ENCODE measurements at regions of chr4 and their contacts with region 1.

Region 1: GRCh38 chr4:169010125-169011023 is at the start of gene CBR4:
- DNase-seq: peak; percentile 90 to 99
- ATAC-seq: peak; percentile 94 to 98 (median 94)
- H3K4me3 ChIP-seq: peak within 1 kb of the TSS; percentile 93
- H3K4me3 Mint-ChIP-seq: peak within 1 kb of the TSS; percentile 88
- H3K27ac ChIP-seq: peak within 1 kb of the TSS; percentile 98
- H3K27ac Mint-ChIP-seq: peak within 1 kb of the TSS; percentile 93 to 99
- H3K4me1 ChIP-seq: peaks cover 24% of the 10 kb centered on the region
- H3K4me1 Mint-ChIP-seq: peaks cover 56 to 59% of the 10 kb centered on the region in 2 donors
- H3K27me3 ChIP-seq: no peaks in the 10 kb centered on the region
- H3K27me3 Mint-ChIP-seq: no peaks in the 10 kb centered on the region
- CTCF ChIP-seq: peak; percentile 2
- total RNA-seq, gene CBR4: 17.2 to 28.1 (median 20.3) TPM

Region 2: DNA sequence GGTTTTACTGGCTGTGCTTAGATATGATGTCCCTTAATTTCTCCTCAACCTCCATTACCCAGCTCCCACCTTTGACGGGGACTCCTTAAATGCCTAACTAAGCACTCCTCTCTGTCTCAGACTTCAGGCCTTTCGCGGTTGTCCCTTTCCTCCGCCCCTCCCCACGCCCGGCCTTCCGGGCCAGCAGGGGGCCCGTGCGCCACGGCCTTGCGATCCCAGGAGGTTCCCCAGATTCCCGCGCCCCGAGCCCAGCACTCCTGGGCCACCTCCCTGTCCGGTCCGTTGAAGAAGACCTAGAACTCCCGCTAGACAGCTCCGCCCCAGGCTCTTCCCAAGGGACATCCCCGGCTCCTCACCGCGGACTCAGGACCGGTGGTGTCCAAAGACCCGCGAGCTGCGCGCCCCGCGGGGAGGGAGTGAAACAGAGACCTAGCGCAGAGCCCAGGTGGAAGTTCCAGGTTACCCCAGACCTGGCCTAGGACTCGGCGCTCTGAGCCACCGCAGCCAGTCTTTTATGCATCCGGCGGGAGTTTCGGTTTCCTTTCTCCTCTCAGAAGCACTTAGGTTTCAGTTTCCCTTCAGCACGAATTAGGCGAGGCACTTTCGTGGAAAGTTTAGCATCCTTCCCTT is 692.0 kb before region 1 on chr4 and contains the start of gene DDX60:
- intact Hi-C with region 1: loop called (anchors 10 kb)
- DNase-seq: peak; percentile 79 to 95
- ATAC-seq: peak; percentile 92 to 95 (median 94)
- H3K4me3 ChIP-seq: peak within 1 kb of the TSS; percentile 83
- H3K4me3 Mint-ChIP-seq: peak within 1 kb of the TSS; percentile 94
- H3K27ac ChIP-seq: peak within 1 kb of the TSS; percentile 93
- H3K27ac Mint-ChIP-seq: peak within 1 kb of the TSS; percentile 96 to 99
- H3K4me1 ChIP-seq: peaks cover 6% of the 10 kb centered on the region
- H3K4me1 Mint-ChIP-seq: peaks cover 26 to 33% of the 10 kb centered on the region in 2 donors
- H3K27me3 ChIP-seq: no peaks in the 10 kb centered on the region
- H3K27me3 Mint-ChIP-seq: no peaks in the 10 kb centered on the region
- CTCF ChIP-seq: peak; percentile 35
- total RNA-seq, gene DDX60: 29.4 to 37.2 (median 31.5) TPM

Region 3: GRCh38 chr4:168710353-168710946 is 299.9 kb before region 1 on chr4:
- intact Hi-C with region 1: loop called (anchors 5 kb)
- DNase-seq: peak in 1 of 2 donors; percentile 13
- ATAC-seq: peak in 2 of 3 donors; percentile 22 to 42
- H3K4me3 ChIP-seq: no peak overlapping the region
- H3K4me3 Mint-ChIP-seq: peak overlapping the region; percentile 35
- H3K27ac ChIP-seq: peak overlapping the region; percentile 43
- H3K27ac Mint-ChIP-seq: peak overlapping the region; percentile 71 to 92
- H3K4me1 ChIP-seq: peaks cover 12% of the 10 kb centered on the region
- H3K4me1 Mint-ChIP-seq: peaks cover 22 to 28% of the 10 kb centered on the region in 2 donors
- H3K27me3 ChIP-seq: no peaks in the 10 kb centered on the region
- H3K27me3 Mint-ChIP-seq: no peaks in the 10 kb centered on the region
- CTCF ChIP-seq: peak; percentile 40

Region 4: GRCh38 chr4:168923526-168924194 is 86.7 kb before region 1 on chr4:
- intact Hi-C with region 1: loop called (anchors 1 kb)
- DNase-seq: peak in 1 of 2 donors; percentile 83
- ATAC-seq: peak; percentile 68 to 77 (median 73)
- H3K4me3 ChIP-seq: no peak overlapping the region
- H3K4me3 Mint-ChIP-seq: no peak overlapping the region
- H3K27ac ChIP-seq: no peak overlapping the region
- H3K27ac Mint-ChIP-seq: no peak overlapping the region
- H3K4me1 ChIP-seq: no peaks in the 10 kb centered on the region
- H3K4me1 Mint-ChIP-seq: peaks cover 5% of the 10 kb centered on the region in 2 donors
- H3K27me3 ChIP-seq: no peaks in the 10 kb centered on the region
- H3K27me3 Mint-ChIP-seq: no peaks in the 10 kb centered on the region
- CTCF ChIP-seq: peak; percentile 89

Region 5: DNA sequence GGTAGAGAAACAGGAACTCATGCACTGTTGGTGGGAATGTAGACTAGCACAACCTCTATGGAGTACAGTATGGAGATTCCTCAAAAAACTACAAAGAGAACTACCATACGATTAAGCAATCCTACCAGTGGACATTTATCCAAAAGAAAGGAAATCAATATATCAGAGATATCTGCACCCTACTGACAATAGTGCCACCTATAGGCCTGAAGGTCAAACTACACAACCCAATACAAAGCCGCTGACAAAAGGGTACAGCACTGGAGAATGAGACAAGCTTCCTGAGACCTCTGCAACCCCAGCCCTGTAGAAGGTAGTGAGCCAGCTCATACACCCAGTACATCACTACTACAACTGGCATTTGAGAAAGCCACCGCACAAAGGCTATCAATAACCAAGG is 67.4 kb before region 1 on chr4:
- intact Hi-C with region 1: no loop called
- DNase-seq: peak in 1 of 2 donors; percentile 23
- ATAC-seq: peak; percentile 52 to 65 (median 57)
- H3K4me3 ChIP-seq: no peak overlapping the region
- H3K4me3 Mint-ChIP-seq: no peak overlapping the region
- H3K27ac ChIP-seq: no peak overlapping the region
- H3K27ac Mint-ChIP-seq: no peak overlapping the region
- H3K4me1 ChIP-seq: no peaks in the 10 kb centered on the region
- H3K4me1 Mint-ChIP-seq: no peaks in the 10 kb centered on the region
- H3K27me3 ChIP-seq: no peaks in the 10 kb centered on the region
- H3K27me3 Mint-ChIP-seq: no peaks in the 10 kb centered on the region
- CTCF ChIP-seq: peak; percentile 73

Region 6: GRCh38 chr4:169045862-169046584 is 35.6 kb after region 1 on chr4:
- intact Hi-C with region 1: no loop called
- DNase-seq: no peak
- ATAC-seq: no peak
- H3K4me3 ChIP-seq: no peak overlapping the region
- H3K4me3 Mint-ChIP-seq: no peak overlapping the region
- H3K27ac ChIP-seq: no peak overlapping the region
- H3K27ac Mint-ChIP-seq: no peak overlapping the region
- H3K4me1 ChIP-seq: no peaks in the 10 kb centered on the region
- H3K4me1 Mint-ChIP-seq: no peaks in the 10 kb centered on the region
- H3K27me3 ChIP-seq: no peaks in the 10 kb centered on the region
- H3K27me3 Mint-ChIP-seq: no peaks in the 10 kb centered on the region
- CTCF ChIP-seq: no peak

Region 7: DNA sequence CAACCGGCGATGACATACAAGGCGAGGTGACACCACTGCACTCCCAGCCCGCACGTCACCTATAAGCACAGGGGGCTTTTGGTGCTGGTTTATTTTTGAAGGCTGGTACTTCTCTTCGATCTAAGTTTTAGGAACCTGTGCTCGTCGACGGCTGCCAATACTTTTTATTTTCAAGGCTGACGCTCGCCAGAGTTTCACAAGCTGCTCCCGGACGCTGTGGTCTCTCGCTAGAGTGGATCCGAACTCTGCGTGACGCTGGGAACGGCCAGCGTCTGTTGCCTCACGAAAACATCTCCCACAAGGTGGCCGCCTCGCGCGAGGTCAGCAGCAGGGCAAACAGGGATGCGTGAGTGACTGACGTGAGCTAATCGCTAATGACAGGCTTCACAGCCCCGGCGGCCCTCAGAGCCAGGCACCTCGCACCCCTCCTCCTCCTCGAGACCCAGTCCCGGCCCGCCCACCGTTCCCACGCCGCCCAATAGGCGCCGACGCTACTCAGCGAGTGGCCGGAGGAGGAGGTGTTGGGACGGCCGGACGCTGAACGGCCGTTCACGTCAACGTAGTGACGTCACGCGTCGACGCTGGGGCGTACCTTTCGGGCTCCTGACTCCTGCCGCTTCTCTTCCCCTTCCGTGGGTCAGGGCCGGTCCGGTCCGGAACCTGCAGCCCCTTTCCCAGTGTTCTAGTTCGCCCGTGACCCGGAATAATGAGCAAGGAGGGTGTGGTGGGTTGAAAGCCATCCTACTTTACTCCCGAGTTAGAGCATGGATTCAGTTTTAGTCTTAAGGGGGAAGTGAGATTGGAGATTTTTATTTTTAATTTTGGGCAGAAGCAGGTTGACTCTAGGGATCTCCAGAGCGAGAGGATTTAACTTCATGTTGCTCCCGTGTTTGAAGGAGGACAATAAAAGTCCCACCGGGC is 609.8 kb after region 1 on chr4 and contains the start of gene CLCN3:
- intact Hi-C with region 1: loop called (anchors 5 kb)
- DNase-seq: peak; percentile 94
- ATAC-seq: peak; percentile 81 to 94 (median 86)
- H3K4me3 ChIP-seq: peak within 1 kb of the TSS; percentile 63
- H3K4me3 Mint-ChIP-seq: peak within 1 kb of the TSS; percentile 95
- H3K27ac ChIP-seq: peak within 1 kb of the TSS; percentile 97
- H3K27ac Mint-ChIP-seq: peak within 1 kb of the TSS; percentile 99 to 100
- H3K4me1 ChIP-seq: peaks cover 9% of the 10 kb centered on the region
- H3K4me1 Mint-ChIP-seq: peaks cover 50 to 55% of the 10 kb centered on the region in 2 donors
- H3K27me3 ChIP-seq: no peaks in the 10 kb centered on the region
- H3K27me3 Mint-ChIP-seq: no peaks in the 10 kb centered on the region
- CTCF ChIP-seq: no peak
- total RNA-seq, gene CLCN3: 20.7 to 26.0 (median 21.0) TPM

Region 8: GRCh38 chr4:170027181-170027829 is 1016.9 kb after region 1 on chr4:
- intact Hi-C with region 1: loop called (anchors 10 kb)
- DNase-seq: peak; percentile 86 to 94
- ATAC-seq: peak; percentile 72 to 84 (median 73)
- H3K4me3 ChIP-seq: peak overlapping the region; percentile 90
- H3K4me3 Mint-ChIP-seq: peak overlapping the region; percentile 94
- H3K27ac ChIP-seq: no peak overlapping the region
- H3K27ac Mint-ChIP-seq: peak overlapping the region; percentile 82 to 86
- H3K4me1 ChIP-seq: peaks cover 10% of the 10 kb centered on the region
- H3K4me1 Mint-ChIP-seq: peaks cover 14 to 16% of the 10 kb centered on the region in 2 donors
- H3K27me3 ChIP-seq: peaks cover 9% of the 10 kb centered on the region
- H3K27me3 Mint-ChIP-seq: peaks cover 7 to 20% of the 10 kb centered on the region in 2 donors
- CTCF ChIP-seq: no peak